ENCODE measurements at regions of chr4 and their contacts with region 1.

Region 1: GRCh38 chr4:156677131-156677531 is 294.5 kb downstream of the PDGFC start:
- DNase-seq: no peak
- ATAC-seq: peak in 1 of 2 donors; percentile 66
- H3K4me3 ChIP-seq: no peak overlapping the region
- H3K27ac ChIP-seq: no peak overlapping the region
- H3K4me1 ChIP-seq: peaks cover 0 to 6% of the 10 kb centered on the region in 2 donors
- H3K27me3 ChIP-seq: no peaks in the 10 kb centered on the region
- CTCF ChIP-seq: peak in 2 of 5 experiments; percentile 17 to 19
- POLR2A ChIP-seq: no peak

Region 2: DNA sequence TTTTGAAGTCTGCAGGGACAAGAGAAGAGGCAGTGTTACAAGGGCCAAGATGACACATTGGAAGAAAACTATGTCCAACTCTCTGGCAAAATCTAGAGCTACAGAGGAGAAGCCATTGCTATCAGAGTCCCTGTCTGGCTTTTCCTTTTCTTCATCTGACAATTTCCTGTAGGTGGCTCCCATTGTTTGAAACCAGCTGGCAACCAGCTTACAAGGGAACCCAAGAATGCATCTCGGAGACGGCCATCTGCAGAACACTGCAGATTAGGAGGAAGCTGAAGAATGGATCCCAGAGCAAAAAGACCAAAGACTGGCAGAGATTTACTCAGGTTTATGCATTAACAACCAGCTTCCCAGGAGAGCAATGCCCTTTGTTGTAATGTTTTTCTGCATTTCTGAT is 507.3 kb before region 1 on chr4:
- in situ Hi-C with region 1: no loop called
- intact Hi-C with region 1: no loop called
- DNase-seq: no peak
- ATAC-seq: no peak
- H3K4me3 ChIP-seq: no peak overlapping the region
- H3K27ac ChIP-seq: no peak overlapping the region
- H3K4me1 ChIP-seq: no peaks in the 10 kb centered on the region
- H3K27me3 ChIP-seq: no peaks in the 10 kb centered on the region
- CTCF ChIP-seq: no peak
- POLR2A ChIP-seq: no peak

Region 3: DNA sequence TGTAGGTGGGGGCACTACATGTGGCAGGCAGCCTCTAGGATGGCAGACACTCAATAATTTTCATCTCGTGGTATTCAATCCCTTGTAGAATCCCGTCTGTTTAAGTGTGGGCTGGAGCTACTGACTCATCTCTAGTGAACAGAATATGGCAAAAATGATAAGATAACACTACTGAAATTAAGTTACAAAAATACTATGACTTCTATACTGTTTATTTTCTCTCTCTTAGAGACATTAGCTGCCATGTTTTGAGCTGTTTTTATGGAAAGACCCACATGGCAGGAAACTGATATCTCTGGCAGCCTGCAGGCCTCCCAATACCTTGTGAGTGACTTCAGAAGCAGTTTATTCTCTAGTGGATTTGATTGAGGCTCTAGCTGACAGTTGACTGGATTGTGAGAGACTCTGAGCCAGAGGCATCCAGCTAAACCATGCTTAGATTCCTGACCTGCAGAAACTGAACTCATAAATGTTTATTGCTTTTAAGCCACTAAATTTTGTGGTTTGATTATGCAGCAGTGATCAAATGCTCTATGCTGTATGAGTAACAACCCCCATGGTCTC is 424.7 kb before region 1 on chr4:
- in situ Hi-C with region 1: no loop called
- intact Hi-C with region 1: no loop called
- DNase-seq: no peak
- ATAC-seq: no peak
- H3K4me3 ChIP-seq: no peak overlapping the region
- H3K27ac ChIP-seq: no peak overlapping the region
- H3K4me1 ChIP-seq: no peaks in the 10 kb centered on the region
- H3K27me3 ChIP-seq: no peaks in the 10 kb centered on the region
- CTCF ChIP-seq: no peak
- POLR2A ChIP-seq: no peak

Region 4: DNA sequence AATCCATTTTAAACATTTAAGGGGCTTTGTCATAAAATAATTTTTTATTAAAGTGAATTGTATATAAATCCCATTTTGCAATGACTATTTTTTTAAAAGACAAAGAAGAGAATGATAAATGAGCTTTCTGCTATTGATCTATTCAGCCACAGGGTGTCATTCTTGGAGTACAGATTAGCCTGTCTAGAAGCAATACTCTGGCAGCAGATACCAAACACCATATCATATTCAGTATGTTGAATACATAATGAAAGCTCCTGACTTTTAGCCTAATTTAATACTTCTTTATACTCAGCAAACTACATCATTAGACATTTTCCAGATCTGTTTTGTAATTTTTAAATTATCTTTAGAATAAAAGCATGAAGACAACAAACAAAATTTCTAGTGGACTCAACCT is 201.8 kb before region 1 on chr4:
- in situ Hi-C with region 1: no loop called
- intact Hi-C with region 1: loop called (anchors 2 kb)
- DNase-seq: no peak
- ATAC-seq: peak; percentile 50 to 66
- H3K4me3 ChIP-seq: no peak overlapping the region
- H3K27ac ChIP-seq: no peak overlapping the region
- H3K4me1 ChIP-seq: no peaks in the 10 kb centered on the region
- H3K27me3 ChIP-seq: no peaks in the 10 kb centered on the region
- CTCF ChIP-seq: peak in 4 of 5 experiments; percentile 20 to 47 (median 34)
- POLR2A ChIP-seq: no peak